ENCODE measurements at regions of chr11 and their contacts with region 1.

Region 1: DNA sequence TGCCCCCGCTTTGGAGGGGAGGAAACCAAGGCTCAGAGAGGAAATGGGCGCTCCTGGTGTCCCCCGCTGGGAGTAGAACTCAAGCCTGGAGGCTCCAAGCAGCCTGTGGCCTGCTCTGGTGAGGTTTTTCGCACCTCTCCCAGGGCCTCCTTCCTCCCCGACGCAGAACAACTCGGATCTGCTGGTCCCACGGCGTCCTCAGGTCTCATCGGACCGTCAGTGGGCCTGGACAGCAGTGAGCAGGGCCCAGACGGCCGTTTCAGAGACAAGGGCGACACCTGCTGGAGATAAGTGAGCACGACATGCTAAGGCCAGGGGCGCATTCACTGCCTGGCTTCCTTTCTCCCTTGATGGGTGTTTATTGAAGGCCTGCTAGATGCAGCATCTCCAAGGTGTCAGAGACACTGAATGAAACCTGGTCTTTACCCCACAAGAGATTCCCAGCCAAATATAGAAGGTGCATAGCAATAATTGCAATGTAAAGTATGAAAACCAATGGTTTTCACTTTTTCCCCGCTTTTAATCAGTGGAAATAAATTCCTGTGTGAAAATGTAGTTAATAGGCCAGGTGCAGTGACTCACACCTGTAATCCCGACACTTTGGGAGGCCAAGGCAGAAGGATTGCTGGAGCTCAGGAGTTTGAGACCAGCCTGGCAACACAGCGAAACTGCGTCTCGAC is 26.9 kb upstream of the CD82 start:
- H3K4me3 Mint-ChIP-seq: no peak overlapping the region
- H3K27ac Mint-ChIP-seq: no peak overlapping the region
- H3K4me1 Mint-ChIP-seq: peaks cover 6% of the 10 kb centered on the region
- H3K27me3 Mint-ChIP-seq: peaks cover 20% of the 10 kb centered on the region

Region 2: DNA sequence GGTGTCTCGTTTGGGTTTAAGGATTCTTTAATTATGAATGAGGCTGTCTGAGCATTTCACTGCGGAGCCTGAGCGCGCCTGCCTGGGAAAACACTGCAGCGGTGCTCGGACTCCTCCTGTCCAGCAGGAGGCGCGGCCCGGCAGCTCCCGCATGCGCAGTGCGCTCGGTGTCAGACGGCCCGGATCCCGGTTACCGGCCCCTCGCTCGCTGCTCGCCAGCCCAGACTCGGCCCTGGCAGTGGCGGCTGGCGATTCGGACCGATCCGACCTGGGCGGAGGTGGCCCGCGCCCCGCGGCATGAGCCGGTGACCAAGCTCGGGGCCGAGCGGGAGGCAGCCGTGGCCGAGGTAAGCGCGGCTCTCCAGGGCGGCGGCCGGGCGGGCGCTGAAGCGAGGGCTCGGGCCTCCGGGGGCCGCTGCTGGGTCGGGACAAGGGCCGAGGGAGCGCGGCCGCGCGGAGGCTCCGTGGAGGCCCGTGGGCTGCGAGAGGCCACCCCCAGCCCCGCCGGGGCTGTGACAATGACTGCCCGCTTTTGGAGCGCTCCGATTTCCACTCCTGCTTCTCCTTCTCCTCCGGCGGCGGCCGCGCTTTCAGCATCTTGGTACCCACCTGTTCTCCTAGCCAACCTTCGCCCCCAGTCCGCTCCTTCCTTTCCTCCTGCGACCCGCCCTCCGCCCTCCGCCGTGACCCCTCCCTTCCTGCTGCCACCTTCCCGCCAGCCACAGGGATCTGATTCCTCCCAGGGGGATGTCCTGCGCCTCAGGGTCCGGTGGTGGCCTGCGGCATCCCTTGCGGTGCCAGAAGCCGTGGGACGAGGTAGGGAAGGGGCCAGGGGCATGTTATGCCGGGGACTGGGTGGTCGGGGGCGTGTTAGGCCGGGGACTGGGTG is 442.8 kb before region 1 on chr11 and contains the start of gene EXT2:
- intact Hi-C with region 1: loop called (anchors 2 kb)
- H3K4me3 Mint-ChIP-seq: peak within 1 kb of the TSS; percentile 80
- H3K27ac Mint-ChIP-seq: no peak within 1 kb of the TSS
- H3K4me1 Mint-ChIP-seq: peaks cover 6% of the 10 kb centered on the region
- H3K27me3 Mint-ChIP-seq: peaks cover 6% of the 10 kb centered on the region

Region 3: GRCh38 chr11:44110231-44110679 is 428.3 kb before region 1 on chr11:
- intact Hi-C with region 1: loop called (anchors 1 kb)
- H3K4me3 Mint-ChIP-seq: no peak overlapping the region
- H3K27ac Mint-ChIP-seq: no peak overlapping the region
- H3K4me1 Mint-ChIP-seq: peaks cover 7% of the 10 kb centered on the region
- H3K27me3 Mint-ChIP-seq: no peaks in the 10 kb centered on the region

Region 4: DNA sequence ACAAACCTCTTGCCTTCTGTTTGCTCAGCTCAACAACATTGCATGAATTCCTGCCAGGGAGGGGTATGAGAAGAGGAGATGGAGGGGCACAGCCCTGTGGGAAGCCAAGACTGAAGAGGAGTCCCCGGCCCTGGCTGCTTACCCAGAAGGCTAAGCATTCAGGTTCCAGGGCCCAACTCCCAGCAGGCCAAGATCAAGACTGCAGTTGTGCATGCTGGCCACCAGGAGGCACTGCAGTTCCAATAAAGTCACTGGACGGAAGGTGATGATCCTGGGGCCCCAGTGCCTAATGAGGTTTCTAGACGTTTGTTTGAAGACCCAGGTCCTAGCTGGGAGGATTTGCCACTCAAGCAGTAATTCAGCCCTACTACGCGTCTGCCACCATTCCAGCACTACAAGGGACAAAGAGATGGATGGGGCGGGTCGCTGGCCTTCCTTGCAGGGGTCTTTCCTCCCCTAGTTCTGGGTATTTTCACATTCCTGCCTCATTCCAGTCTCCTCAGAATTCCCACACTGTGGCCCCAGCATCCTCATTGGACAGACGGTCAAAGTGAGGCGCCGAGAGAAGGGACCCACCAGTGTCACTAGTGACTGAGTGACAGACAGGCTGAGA is 252.1 kb before region 1 on chr11:
- intact Hi-C with region 1: loop called (anchors 1 kb)
- H3K4me3 Mint-ChIP-seq: no peak overlapping the region
- H3K27ac Mint-ChIP-seq: no peak overlapping the region
- H3K4me1 Mint-ChIP-seq: no peaks in the 10 kb centered on the region
- H3K27me3 Mint-ChIP-seq: peaks cover 9% of the 10 kb centered on the region

Region 5: GRCh38 chr11:44519989-44520737 is 18.4 kb before region 1 on chr11:
- intact Hi-C with region 1: loop called (anchors 1 kb)
- H3K4me3 Mint-ChIP-seq: no peak overlapping the region
- H3K27ac Mint-ChIP-seq: no peak overlapping the region
- H3K4me1 Mint-ChIP-seq: peaks cover 11% of the 10 kb centered on the region
- H3K27me3 Mint-ChIP-seq: peaks cover 39% of the 10 kb centered on the region

Measured in dendritic cell treated with granulocyte-macrophage colony-stimulating factor and Interleukin-4, amounts not matched to agents 40 ng/mL and 50 ng/mL, for 4 days (primary cell).